ENCODE measurements at regions of chr18 and their contacts with region 1.

Region 1: GRCh38 chr18:22563098-22563707 is 145.5 kb upstream of the CTAGE1 start:
- DNase-seq: peak; percentile 28 to 68
- H3K4me3 ChIP-seq: 0 out of 2 replicates have a peak overlapping the region, but pooled peaks have one; percentile 1
- H3K27ac ChIP-seq: no peak overlapping the region; the same call in 1 of the 2 replicates
- H3K4me1 ChIP-seq: peaks cover 25% of the 10 kb centered on the region
- H3K27me3 ChIP-seq: no peaks in the 10 kb centered on the region
- CTCF ChIP-seq: peak; percentile 80

Region 2: DNA sequence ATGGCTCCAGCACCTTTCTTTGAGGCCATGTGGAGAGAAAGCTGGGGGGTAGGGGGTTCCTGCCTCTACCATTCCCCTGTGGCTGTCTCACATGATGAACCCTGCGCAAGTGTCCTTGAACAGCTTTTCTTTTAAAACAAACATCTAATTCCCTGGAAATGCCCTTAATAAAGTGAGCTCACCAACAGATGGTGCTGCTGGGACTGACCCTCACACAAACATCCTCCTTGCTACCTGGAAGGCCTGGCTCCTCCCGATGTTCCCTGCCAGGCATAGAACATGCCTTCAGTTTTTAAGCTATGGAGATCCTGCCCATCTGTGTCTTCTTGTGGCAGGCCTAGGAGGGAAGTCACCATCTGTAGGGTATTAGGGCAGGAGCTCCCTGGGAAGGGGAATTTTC is 454.5 kb before region 1 on chr18:
- CTCF ChIA-PET with region 1: no interaction called
- POLR2A ChIA-PET with region 1: no interaction called
- intact Hi-C with region 1: loop called (anchors 2 kb)
- DNase-seq: peak; percentile 4 to 34
- H3K4me3 ChIP-seq: no peak overlapping the region
- H3K27ac ChIP-seq: no peak overlapping the region
- H3K4me1 ChIP-seq: peaks cover 20% of the 10 kb centered on the region
- H3K27me3 ChIP-seq: no peaks in the 10 kb centered on the region
- CTCF ChIP-seq: no peak; the same call in 1 of the 2 replicates

Region 3: GRCh38 chr18:22276334-22276713 is 286.9 kb before region 1 on chr18:
- CTCF ChIA-PET with region 1: no interaction called
- POLR2A ChIA-PET with region 1: interaction called, 14 read pairs
- intact Hi-C with region 1: no loop called
- DNase-seq: no peak
- H3K4me3 ChIP-seq: no peak overlapping the region
- H3K27ac ChIP-seq: no peak overlapping the region
- H3K4me1 ChIP-seq: no peaks in the 10 kb centered on the region
- H3K27me3 ChIP-seq: no peaks in the 10 kb centered on the region
- CTCF ChIP-seq: no peak

Region 4: DNA sequence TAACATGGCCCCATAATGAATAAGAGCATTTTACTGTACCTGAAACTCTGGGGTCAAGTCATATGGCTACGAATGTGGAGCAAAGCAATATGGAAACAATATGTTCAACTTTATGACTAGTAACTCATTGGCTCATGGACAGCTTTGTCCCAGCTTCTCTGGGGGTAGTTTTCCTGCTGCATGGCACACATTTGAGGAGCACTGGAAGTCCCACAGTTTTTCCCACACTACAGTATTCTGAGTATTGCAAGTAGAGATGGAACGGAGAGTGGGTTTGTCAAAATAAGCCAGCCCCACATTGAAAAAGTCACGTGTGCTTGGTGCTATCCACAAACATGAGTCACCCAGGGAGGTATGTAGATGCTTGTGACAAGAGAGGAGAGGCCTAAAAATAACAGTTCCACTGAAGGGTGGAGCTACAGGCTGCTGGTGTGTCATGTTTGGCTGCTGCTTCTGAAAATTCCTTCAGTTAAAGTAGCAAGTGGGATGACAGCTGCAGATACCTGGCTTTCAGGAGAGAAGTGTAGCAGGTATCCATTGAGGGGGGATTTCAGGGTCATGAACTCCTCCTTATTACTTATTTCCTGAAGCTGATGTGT is 97.2 kb before region 1 on chr18:
- CTCF ChIA-PET with region 1: no interaction called
- POLR2A ChIA-PET with region 1: no interaction called
- intact Hi-C with region 1: loop called (anchors 1 kb)
- DNase-seq: peak; percentile 50 to 91
- H3K4me3 ChIP-seq: peak overlapping the region; percentile 52; the same call in 1 of the 2 replicates
- H3K27ac ChIP-seq: peak overlapping the region; percentile 100
- H3K4me1 ChIP-seq: peaks cover 39% of the 10 kb centered on the region
- H3K27me3 ChIP-seq: no peaks in the 10 kb centered on the region
- CTCF ChIP-seq: no peak

Region 5: DNA sequence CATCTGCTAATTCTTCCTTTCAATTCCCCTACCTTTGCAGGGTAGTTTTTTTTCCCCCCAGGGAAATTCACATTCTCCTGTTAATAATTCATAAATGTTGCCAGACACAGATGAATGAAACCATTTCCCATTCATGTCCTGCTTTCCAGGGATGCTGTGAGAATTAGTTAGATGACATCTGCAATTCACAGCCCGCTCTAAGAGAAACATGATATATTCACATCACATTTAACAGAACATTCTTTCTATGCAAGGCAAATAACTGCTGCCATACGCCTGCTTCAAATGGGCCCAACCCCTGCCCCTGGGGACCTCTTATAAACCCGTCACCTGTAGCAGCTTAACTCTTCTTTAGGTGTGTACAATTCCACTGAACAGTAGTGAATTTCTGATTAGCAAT is 34.9 kb before region 1 on chr18:
- CTCF ChIA-PET with region 1: no interaction called
- POLR2A ChIA-PET with region 1: no interaction called
- intact Hi-C with region 1: no loop called
- DNase-seq: no peak
- H3K4me3 ChIP-seq: no peak overlapping the region
- H3K27ac ChIP-seq: no peak overlapping the region
- H3K4me1 ChIP-seq: no peaks in the 10 kb centered on the region
- H3K27me3 ChIP-seq: no peaks in the 10 kb centered on the region
- CTCF ChIP-seq: no peak

Region 6: DNA sequence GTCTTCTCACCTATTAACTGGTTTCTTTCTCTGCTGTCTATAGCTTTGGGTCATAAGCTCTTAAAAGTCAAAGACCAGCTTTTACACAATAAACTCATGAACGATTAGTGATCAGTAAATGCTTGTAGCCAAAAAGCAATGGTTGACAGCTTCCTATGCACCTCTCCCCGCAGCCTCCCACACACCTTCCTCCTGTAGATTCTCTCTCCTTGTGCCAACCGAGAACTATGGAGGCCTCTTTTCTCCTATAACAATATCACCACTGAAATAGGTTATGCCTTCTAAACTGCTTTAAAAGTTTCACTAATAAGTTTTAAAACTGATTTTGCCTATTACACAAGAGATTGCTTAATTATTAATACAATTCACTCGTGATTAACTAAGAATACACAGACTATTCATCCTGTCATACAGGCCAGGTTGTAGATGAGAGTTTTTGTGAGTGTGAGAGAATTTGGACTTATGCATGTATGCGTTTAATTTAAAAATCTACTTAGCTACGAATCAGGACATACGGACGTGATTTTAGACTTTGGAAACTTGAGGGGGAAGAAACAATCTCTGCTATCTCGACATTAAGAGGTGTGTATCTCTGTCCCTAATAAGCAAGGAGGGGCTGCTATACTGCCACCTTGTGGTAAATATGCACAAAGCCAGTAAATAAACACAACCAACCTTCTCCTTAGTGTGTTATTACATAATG is 140.8 kb after region 1 on chr18:
- CTCF ChIA-PET with region 1: no interaction called
- POLR2A ChIA-PET with region 1: no interaction called
- intact Hi-C with region 1: loop called (anchors 1 kb)
- DNase-seq: peak in 1 of 2 experiments; percentile 56
- H3K4me3 ChIP-seq: no peak overlapping the region
- H3K27ac ChIP-seq: no peak overlapping the region
- H3K4me1 ChIP-seq: no peaks in the 10 kb centered on the region
- H3K27me3 ChIP-seq: no peaks in the 10 kb centered on the region
- CTCF ChIP-seq: peak; percentile 78

Measured in PC-9 (cell line).